CD8-positive, alpha-beta memory T cell (primary cell): ENCODE measurements at regions of chr12 and their contacts with region 1.

Region 1: DNA sequence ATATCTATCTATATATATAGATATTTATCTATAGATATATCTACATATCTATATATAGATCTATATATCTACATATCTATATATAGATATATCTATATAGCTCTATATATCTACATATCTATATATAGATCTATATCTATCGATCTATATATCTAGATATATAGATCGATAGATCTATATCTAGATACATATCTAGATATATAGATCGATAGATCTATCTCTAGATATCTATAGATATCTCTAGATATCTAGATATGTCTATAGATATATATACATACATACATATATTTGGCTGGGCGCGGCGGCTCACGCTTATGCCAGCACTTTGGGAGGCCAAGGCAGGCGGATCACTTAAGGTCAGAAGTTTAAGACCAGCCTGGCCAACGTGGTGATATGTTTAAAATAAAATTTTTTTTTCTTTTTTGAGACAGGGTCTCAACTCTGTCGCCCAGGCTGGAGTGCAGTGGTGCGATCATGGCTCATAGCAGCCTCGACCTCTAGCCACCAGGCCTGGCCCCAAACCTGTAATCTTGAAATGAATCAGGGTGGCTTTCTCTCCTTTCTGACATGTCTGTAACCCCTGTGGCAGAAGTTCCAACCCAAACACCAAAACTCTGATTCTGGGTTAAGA is 18.1 kb downstream of the ARPC3 start:
- DNase-seq: no peak
- H3K4me3 ChIP-seq: no peak overlapping the region
- H3K4me3 Mint-ChIP-seq: peak overlapping the region in 3 of 7 donors; percentile 96 to 100 (median 97)
- H3K27ac ChIP-seq: no peak overlapping the region
- H3K27ac Mint-ChIP-seq: peak overlapping the region in 2 of 8 donors; percentile 6 to 89
- H3K4me1 ChIP-seq: no peaks in the 10 kb centered on the region
- H3K4me1 Mint-ChIP-seq: peaks cover 0 to 3% (median 3%) of the 10 kb centered on the region in 3 donors
- H3K27me3 ChIP-seq: no peaks in the 10 kb centered on the region
- H3K27me3 Mint-ChIP-seq: no peaks in the 10 kb centered on the region

Region 2: DNA sequence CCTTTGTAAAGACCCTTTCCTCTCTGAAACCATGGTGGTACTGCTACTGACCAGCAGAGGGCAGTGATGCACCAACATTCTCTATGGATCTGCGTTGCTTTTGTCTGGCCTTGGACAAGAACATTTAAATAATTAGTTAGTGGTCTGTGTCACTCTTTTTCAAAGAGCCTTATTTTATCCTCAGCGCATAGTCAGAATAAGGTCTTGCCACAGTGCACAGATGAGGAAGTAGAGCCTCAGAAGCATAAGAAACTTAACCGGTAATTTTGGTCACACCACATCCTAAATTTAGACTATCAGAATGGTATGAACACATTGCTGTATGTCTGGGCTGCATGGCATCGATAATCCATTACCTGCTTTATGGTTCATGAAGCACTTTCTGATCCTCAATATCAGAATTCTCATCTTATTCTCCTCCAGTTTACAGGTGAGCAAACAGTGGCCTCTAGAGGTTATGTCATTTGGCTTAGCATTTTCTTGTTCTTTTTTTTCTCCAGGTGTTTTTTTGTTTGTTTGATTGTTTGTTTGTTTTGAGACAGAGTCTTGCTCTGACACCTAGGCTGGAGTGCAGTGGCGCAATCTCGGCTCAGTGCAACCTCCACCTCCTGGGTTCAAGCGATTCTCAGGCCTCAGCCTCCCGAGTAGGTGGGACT is 331.6 kb before region 1 on chr12:
- CTCF ChIA-PET with region 1: interaction called, 39 read pairs
- POLR2A ChIA-PET with region 1: interaction called, 5 read pairs
- DNase-seq: peak; percentile 25 to 75 (median 53)
- H3K4me3 ChIP-seq: no peak overlapping the region
- H3K4me3 Mint-ChIP-seq: no peak overlapping the region
- H3K27ac ChIP-seq: no peak overlapping the region
- H3K27ac Mint-ChIP-seq: peak overlapping the region in 7 of 8 donors; percentile 13 to 86 (median 55)
- H3K4me1 ChIP-seq: no peaks in the 10 kb centered on the region
- H3K4me1 Mint-ChIP-seq: peaks cover 6 to 8% (median 7%) of the 10 kb centered on the region in 3 donors
- H3K27me3 ChIP-seq: no peaks in the 10 kb centered on the region
- H3K27me3 Mint-ChIP-seq: no peaks in the 10 kb centered on the region

Region 3: GRCh38 chr12:110193196-110193595 is 238.9 kb before region 1 on chr12:
- CTCF ChIA-PET with region 1: no interaction called
- POLR2A ChIA-PET with region 1: no interaction called
- DNase-seq: no peak
- H3K4me3 ChIP-seq: no peak overlapping the region
- H3K4me3 Mint-ChIP-seq: no peak overlapping the region
- H3K27ac ChIP-seq: no peak overlapping the region
- H3K27ac Mint-ChIP-seq: no peak overlapping the region
- H3K4me1 ChIP-seq: no peaks in the 10 kb centered on the region
- H3K4me1 Mint-ChIP-seq: no peaks in the 10 kb centered on the region
- H3K27me3 ChIP-seq: no peaks in the 10 kb centered on the region
- H3K27me3 Mint-ChIP-seq: no peaks in the 10 kb centered on the region

Region 4: DNA sequence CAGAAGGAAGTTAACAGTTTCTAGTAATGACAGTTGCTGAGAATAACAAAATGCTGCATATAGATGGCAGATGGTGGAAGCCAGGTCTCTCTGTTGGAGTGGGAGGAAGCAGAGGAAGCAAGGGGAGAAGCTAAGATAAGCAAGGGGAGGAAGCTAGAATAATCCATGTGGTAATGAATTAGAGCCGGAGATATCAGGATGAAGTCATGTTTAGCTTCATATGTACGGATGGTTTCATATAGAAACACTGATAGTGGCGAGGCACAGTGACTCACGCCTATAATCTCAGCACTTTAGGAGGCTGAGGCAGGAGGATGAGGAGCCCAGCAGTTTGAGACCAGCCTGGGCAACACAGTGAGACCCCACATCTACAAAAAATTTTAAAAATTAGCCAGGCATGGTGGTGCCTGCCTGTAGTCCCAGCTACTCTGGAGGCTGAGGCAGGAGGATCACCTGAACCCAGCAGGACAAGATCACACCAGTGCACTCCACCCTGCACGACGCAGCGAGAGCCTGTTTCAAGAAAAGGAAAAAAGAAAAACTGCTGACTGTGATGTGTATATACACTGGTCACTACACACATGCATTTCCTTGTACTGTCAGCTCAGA is 77.8 kb before region 1 on chr12:
- CTCF ChIA-PET with region 1: interaction called, 19 read pairs
- POLR2A ChIA-PET with region 1: interaction called, 5 read pairs
- DNase-seq: no peak
- H3K4me3 ChIP-seq: no peak overlapping the region
- H3K4me3 Mint-ChIP-seq: no peak overlapping the region
- H3K27ac ChIP-seq: no peak overlapping the region
- H3K27ac Mint-ChIP-seq: no peak overlapping the region
- H3K4me1 ChIP-seq: peaks cover 13% of the 10 kb centered on the region
- H3K4me1 Mint-ChIP-seq: peaks cover 10 to 28% (median 22%) of the 10 kb centered on the region in 3 donors
- H3K27me3 ChIP-seq: no peaks in the 10 kb centered on the region
- H3K27me3 Mint-ChIP-seq: no peaks in the 10 kb centered on the region

Region 5: GRCh38 chr12:110403146-110403975 is 28.7 kb before region 1 on chr12 and contains the start of gene ANAPC7:
- CTCF ChIA-PET with region 1: interaction called, 15 read pairs
- POLR2A ChIA-PET with region 1: interaction called, 6 read pairs
- DNase-seq: peak; percentile 79 to 90 (median 86)
- H3K4me3 ChIP-seq: peak within 1 kb of the TSS; percentile 82
- H3K4me3 Mint-ChIP-seq: peak within 1 kb of the TSS; percentile 99 to 100 (median 100)
- H3K27ac ChIP-seq: peak within 1 kb of the TSS; percentile 81
- H3K27ac Mint-ChIP-seq: peak within 1 kb of the TSS; percentile 96 to 100 (median 99)
- H3K4me1 ChIP-seq: peaks cover 21% of the 10 kb centered on the region
- H3K4me1 Mint-ChIP-seq: peaks cover 31 to 49% (median 44%) of the 10 kb centered on the region in 3 donors
- H3K27me3 ChIP-seq: no peaks in the 10 kb centered on the region
- H3K27me3 Mint-ChIP-seq: no peaks in the 10 kb centered on the region
- total RNA-seq, gene ANAPC7: 66.7 to 67.1 TPM

Region 6: GRCh38 chr12:110421159-110421661 is 10.9 kb before region 1 on chr12:
- CTCF ChIA-PET with region 1: interaction called, 22 read pairs
- POLR2A ChIA-PET with region 1: no interaction called
- DNase-seq: no peak
- H3K4me3 ChIP-seq: no peak overlapping the region
- H3K4me3 Mint-ChIP-seq: no peak overlapping the region
- H3K27ac ChIP-seq: no peak overlapping the region
- H3K27ac Mint-ChIP-seq: no peak overlapping the region
- H3K4me1 ChIP-seq: no peaks in the 10 kb centered on the region
- H3K4me1 Mint-ChIP-seq: no peaks in the 10 kb centered on the region
- H3K27me3 ChIP-seq: no peaks in the 10 kb centered on the region
- H3K27me3 Mint-ChIP-seq: peaks cover 8 to 10% of the 10 kb centered on the region in 2 donors

Region 7: DNA sequence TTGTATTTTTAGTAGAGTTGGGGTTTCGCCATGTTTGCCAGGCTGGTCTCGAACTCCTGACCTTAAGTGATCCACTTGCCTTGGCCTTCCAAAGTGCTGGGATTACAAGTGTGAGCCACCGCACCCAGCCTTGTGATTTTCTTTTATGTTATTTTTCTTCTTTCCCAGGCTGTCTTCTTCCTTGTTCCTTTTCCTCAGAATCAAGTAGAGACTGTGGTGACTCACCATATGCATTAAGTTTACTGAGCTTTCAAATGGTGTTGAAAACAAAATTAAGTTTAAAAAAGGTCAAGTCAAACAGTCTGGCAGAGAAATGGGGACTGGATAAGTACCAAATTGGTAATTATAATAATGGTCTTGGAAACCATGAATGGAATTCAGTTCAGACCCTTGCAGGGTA is 12.4 kb after region 1 on chr12:
- CTCF ChIA-PET with region 1: interaction called, 22 read pairs
- POLR2A ChIA-PET with region 1: interaction called, 12 read pairs
- DNase-seq: no peak
- H3K4me3 ChIP-seq: no peak overlapping the region
- H3K4me3 Mint-ChIP-seq: peak overlapping the region in 1 of 7 donors; percentile 71
- H3K27ac ChIP-seq: no peak overlapping the region
- H3K27ac Mint-ChIP-seq: peak overlapping the region in 1 of 8 donors; percentile 23
- H3K4me1 ChIP-seq: peaks cover 14% of the 10 kb centered on the region
- H3K4me1 Mint-ChIP-seq: peaks cover 29 to 39% (median 37%) of the 10 kb centered on the region in 3 donors
- H3K27me3 ChIP-seq: no peaks in the 10 kb centered on the region
- H3K27me3 Mint-ChIP-seq: no peaks in the 10 kb centered on the region

Region 8: DNA sequence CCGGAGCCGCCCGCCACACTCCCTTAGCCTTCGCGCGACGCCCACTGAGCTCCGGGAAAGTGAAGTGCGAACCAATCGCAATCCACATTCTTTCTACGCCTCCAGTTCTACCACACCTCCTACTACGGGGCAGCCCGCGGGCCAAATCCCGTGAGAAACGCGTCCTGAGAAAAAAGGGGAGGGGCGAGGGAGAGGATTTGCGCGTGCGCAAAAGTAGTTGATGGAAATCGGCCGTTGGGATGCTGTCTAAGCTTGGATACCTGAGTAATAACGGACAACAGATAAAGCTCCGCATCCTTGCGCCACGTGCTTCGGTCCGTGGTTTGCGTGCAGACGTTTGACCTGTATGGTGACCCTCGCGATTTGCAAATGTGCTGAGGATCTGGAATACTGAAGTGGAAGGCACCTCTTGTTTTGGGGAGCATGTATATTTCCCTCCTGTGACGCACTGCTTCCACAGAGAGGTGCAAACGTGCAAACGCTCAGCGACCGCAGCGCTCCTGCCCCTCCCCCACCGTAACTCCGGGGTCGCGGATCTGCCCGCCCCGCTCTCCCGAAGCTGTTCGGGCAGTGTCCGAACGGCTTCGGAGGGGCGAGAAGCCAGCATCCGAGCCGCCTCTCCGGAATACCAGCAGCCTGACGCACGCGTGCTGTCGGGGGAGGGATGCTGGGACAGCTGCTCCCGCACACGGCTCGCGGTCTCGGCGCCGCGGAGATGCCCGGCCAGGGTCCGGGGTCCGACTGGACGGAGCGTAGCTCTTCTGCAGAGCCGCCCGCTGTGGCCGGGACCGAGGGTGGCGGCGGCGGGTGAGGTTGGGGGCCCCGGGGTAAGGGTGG is 36.4 kb after region 1 on chr12 and contains the starts of genes FAM216A and GPN3:
- CTCF ChIA-PET with region 1: interaction called, 16 read pairs
- POLR2A ChIA-PET with region 1: interaction called, 10 read pairs
- DNase-seq: peak; percentile 90 to 98 (median 96)
- H3K4me3 ChIP-seq: peak within 1 kb of the TSS; percentile 93
- H3K4me3 Mint-ChIP-seq: peak within 1 kb of the TSS; percentile 92 to 99 (median 98)
- H3K27ac ChIP-seq: peak within 1 kb of the TSS; percentile 78
- H3K27ac Mint-ChIP-seq: peak within 1 kb of the TSS; percentile 82 to 99 (median 98)
- H3K4me1 ChIP-seq: peaks cover 25% of the 10 kb centered on the region
- H3K4me1 Mint-ChIP-seq: peaks cover 18 to 45% (median 37%) of the 10 kb centered on the region in 3 donors
- H3K27me3 ChIP-seq: no peaks in the 10 kb centered on the region
- H3K27me3 Mint-ChIP-seq: peaks cover 0 to 2% of the 10 kb centered on the region in 2 donors
- total RNA-seq, gene FAM216A: 43.2 to 44.0 TPM
- total RNA-seq, gene GPN3: 59.4 TPM